WTC11 (cell line): ENCODE measurements at regions of chr14 and their contacts with region 1.

Region 1: GRCh38 chr14:23631702-23632460 is 4.3 kb upstream of the DHRS2 start:
- DNase-seq: peak; percentile 90
- ATAC-seq: peak; percentile 86
- H3K4me3 Mint-ChIP-seq: no peak overlapping the region
- H3K27ac Mint-ChIP-seq: no peak overlapping the region
- H3K4me1 Mint-ChIP-seq: peaks cover 19% of the 10 kb centered on the region
- H3K27me3 Mint-ChIP-seq: peaks cover 3% of the 10 kb centered on the region
- CTCF ChIP-seq: peak; percentile 96

Region 2: DNA sequence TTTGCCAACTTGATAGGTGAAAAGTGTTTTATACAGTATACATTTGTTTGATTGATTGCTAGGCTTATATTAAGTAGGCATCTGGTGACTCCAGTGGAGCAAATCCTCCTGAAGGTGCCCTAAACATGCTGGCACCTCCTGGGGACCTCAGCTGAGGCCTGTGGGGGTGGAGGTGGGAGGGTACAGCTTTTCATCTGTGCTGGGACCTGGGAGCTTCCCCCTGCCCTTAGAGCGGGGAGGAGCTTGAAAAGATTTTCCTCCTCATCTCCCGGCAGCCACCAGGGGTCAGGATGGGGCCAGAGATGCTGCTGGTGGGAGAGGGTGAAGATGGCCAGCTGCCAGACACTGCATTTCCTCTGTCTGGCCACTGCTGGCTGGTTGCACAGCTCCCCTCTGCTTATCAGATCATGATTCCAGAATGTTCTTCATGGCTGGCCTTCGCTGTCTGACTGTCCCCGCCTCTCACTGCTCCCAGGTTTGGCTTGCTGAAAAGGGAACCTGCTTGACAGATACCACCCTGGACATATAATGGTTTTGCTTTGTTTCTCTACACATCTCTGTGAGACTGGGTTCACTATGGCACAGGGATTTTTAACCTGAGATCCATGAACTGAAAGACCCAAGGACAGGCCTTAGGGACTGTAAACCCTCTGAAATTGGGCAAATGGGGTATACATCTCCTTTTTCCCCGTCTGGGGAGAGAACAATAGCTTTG is 42.8 kb before region 1 on chr14:
- CTCF ChIA-PET with region 1: interaction called, 103 read pairs
- POLR2A ChIA-PET with region 1: interaction called, 5 read pairs
- DNase-seq: peak; percentile 91
- ATAC-seq: peak; percentile 100
- H3K4me3 Mint-ChIP-seq: no peak overlapping the region
- H3K27ac Mint-ChIP-seq: no peak overlapping the region
- H3K4me1 Mint-ChIP-seq: peaks cover 20% of the 10 kb centered on the region
- H3K27me3 Mint-ChIP-seq: peaks cover 16% of the 10 kb centered on the region
- CTCF ChIP-seq: peak; percentile 68

Region 3: GRCh38 chr14:23653066-23653465 is 21.2 kb after region 1 on chr14:
- CTCF ChIA-PET with region 1: interaction called, 37 read pairs
- POLR2A ChIA-PET with region 1: no interaction called
- DNase-seq: no peak
- ATAC-seq: no peak
- H3K4me3 Mint-ChIP-seq: no peak overlapping the region
- H3K27ac Mint-ChIP-seq: no peak overlapping the region
- H3K4me1 Mint-ChIP-seq: no peaks in the 10 kb centered on the region
- H3K27me3 Mint-ChIP-seq: peaks cover 7% of the 10 kb centered on the region
- CTCF ChIP-seq: no peak

Region 4: DNA sequence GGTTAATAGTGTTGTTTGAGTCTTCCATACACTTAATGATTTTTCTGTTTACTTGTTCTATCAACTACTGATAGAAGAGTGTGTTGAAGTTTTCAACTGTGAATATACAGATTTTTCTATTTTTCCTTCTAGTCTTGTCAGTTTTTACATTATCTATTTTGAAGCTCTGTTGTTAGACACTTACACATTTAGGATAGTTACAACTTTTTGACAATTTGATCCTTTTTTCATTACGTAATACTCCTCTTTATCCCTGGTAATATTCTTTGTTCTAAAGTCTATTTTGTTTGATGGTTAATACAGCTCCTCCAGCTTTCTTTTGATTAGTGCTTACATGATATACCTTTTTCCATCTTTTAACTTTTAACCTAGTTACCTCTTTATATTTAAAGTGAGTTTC is 49.5 kb after region 1 on chr14:
- CTCF ChIA-PET with region 1: interaction called, 10 read pairs
- POLR2A ChIA-PET with region 1: no interaction called
- DNase-seq: no peak
- ATAC-seq: no peak
- H3K4me3 Mint-ChIP-seq: no peak overlapping the region
- H3K27ac Mint-ChIP-seq: no peak overlapping the region
- H3K4me1 Mint-ChIP-seq: no peaks in the 10 kb centered on the region
- H3K27me3 Mint-ChIP-seq: 0 out of 2 replicates have a peak, but pooled peaks cover 3% of the 10 kb centered on the region
- CTCF ChIP-seq: no peak

Region 5: DNA sequence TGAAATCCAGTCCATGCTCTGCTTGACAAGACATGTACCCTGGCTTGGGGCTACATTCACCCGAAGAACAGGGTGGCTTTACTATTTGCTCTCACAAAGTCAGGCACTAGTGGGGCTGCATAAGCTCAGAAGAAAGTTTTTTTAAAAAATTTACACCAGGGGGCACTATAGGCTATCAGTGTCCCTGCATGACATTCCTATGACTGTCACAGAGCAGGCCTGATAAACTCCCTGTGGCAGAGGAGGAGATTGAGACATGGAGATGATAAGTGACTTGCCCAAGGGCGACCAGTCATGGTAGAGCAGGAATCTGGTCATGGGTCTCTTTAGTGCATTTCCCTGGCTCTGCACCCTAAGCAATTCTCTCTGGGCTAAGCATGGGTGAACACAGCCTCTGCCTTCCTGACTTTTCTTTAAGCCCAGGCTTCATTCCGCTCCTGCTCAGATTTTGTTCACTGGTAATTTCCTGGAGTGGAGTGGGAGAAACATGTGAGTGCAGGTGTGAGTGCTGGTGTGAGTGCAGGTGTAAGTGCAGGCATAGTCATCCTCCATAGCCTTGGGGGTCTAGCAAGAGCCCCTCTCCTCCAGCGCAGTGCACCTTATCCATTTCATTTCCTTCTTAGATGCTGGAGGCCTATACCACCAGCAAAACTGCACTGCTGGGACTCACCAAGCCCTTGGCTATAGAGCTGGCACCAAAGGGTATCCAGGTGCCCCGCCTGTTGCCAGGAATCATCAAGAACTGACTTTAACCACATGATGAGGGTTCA is 95.9 kb after region 1 on chr14:
- CTCF ChIA-PET with region 1: interaction called, 65 read pairs
- POLR2A ChIA-PET with region 1: no interaction called
- DNase-seq: no peak
- ATAC-seq: peak; percentile 86
- H3K4me3 Mint-ChIP-seq: no peak overlapping the region
- H3K27ac Mint-ChIP-seq: no peak overlapping the region
- H3K4me1 Mint-ChIP-seq: no peaks in the 10 kb centered on the region
- H3K27me3 Mint-ChIP-seq: no peaks in the 10 kb centered on the region
- CTCF ChIP-seq: peak; percentile 61

Region 6: DNA sequence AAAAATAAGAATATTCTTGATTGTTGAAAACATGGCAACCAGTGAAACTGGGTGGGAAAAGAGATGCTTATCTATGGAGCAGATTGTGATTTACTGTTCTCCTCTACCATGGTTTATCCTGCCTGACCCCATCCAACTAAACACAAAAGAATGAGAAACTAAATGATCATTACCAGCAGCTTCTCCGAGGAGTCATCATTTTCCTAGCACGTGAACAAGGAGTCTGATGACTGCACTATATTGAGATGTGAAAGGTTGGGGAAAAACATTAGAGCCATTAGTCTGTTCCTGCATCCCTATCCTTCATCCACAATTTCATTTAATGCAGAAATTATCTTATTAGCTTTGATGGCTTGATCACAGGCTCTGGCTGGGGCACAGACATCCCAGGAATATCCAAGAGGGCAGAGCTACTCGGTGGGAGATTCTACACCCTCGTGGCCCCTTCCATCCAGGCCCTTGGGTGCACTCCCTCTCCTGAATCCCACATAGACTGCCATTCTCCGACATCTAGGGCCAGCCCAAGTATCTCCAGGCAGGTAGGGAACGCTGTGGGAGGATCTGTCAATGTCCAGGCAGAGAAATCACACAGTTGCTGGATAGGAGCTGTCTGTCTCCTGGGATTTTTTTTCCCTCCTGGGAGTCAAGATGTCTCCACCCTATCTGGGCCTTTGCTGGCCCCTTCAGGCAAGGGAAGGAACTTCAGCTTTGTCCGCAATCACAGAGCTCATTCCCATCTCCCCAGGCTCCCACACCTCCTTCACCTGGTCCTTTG is 278.4 kb after region 1 on chr14:
- CTCF ChIA-PET with region 1: interaction called, 177 read pairs
- POLR2A ChIA-PET with region 1: interaction called, 3 read pairs
- DNase-seq: peak; percentile 90
- ATAC-seq: peak; percentile 100
- H3K4me3 Mint-ChIP-seq: no peak overlapping the region
- H3K27ac Mint-ChIP-seq: no peak overlapping the region
- H3K4me1 Mint-ChIP-seq: peaks cover 10% of the 10 kb centered on the region
- H3K27me3 Mint-ChIP-seq: peaks cover 12% of the 10 kb centered on the region
- CTCF ChIP-seq: peak; percentile 71

Region 7: DNA sequence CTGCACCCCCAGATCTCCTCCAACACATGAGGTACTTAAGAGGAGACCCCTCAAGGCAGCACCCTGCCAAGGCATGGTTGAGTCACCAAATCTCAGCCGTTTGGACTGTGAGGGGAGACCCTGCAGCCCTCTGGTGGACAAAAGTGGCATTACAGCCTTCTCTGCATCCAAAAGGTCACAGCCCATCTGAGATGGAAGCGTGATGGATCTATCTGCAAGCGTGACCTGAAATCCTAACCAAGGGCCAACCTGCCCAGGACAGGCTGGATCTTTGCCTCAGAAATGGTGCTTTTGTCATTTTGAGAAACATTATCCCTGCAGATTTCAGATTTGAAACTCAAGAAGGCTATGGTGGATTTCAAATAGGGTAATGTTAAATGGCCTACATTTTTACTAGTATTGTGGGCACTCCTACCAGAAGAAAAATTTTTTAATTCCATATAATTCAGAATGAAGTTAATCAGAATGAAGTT is 298.0 kb after region 1 on chr14:
- CTCF ChIA-PET with region 1: interaction called, 26 read pairs
- POLR2A ChIA-PET with region 1: no interaction called
- DNase-seq: peak; percentile 91
- ATAC-seq: peak; percentile 96
- H3K4me3 Mint-ChIP-seq: no peak overlapping the region
- H3K27ac Mint-ChIP-seq: no peak overlapping the region
- H3K4me1 Mint-ChIP-seq: no peaks in the 10 kb centered on the region; the same call in 1 of the 2 replicates
- H3K27me3 Mint-ChIP-seq: peaks cover 6% of the 10 kb centered on the region
- CTCF ChIP-seq: peak; percentile 98